Activated CD4-positive, alpha-beta T cell treated with anti-CD3 and anti-CD28 coated beads for 36 hours (primary cell): ENCODE measurements at regions of chr2 and their contacts with region 1.

Region 1: GRCh38 chr2:219229305-219230058 is at the starts of genes ANKZF1 and ATG9A:
- DNase-seq: peak; percentile 99
- ATAC-seq: peak; percentile 98
- H3K4me3 Mint-ChIP-seq: peak within 1 kb of the TSS; percentile 98
- H3K27ac Mint-ChIP-seq: peak within 1 kb of the TSS; percentile 98
- H3K4me1 Mint-ChIP-seq: peaks cover 34% of the 10 kb centered on the region
- H3K27me3 Mint-ChIP-seq: no peaks in the 10 kb centered on the region
- total RNA-seq, gene ANKZF1: 140 to 166 TPM
- total RNA-seq, gene ATG9A: 43.5 to 45.6 TPM

Region 2: GRCh38 chr2:219029829-219030165 is 199.7 kb before region 1 on chr2:
- CTCF ChIA-PET with region 1: no interaction called
- POLR2A ChIA-PET with region 1: no interaction called
- intact Hi-C with region 1: no loop called
- DNase-seq: peak; percentile 88
- ATAC-seq: peak; percentile 98
- H3K4me3 Mint-ChIP-seq: no peak overlapping the region
- H3K27ac Mint-ChIP-seq: no peak overlapping the region
- H3K4me1 Mint-ChIP-seq: no peaks in the 10 kb centered on the region
- H3K27me3 Mint-ChIP-seq: peaks cover 11% of the 10 kb centered on the region

Region 3: DNA sequence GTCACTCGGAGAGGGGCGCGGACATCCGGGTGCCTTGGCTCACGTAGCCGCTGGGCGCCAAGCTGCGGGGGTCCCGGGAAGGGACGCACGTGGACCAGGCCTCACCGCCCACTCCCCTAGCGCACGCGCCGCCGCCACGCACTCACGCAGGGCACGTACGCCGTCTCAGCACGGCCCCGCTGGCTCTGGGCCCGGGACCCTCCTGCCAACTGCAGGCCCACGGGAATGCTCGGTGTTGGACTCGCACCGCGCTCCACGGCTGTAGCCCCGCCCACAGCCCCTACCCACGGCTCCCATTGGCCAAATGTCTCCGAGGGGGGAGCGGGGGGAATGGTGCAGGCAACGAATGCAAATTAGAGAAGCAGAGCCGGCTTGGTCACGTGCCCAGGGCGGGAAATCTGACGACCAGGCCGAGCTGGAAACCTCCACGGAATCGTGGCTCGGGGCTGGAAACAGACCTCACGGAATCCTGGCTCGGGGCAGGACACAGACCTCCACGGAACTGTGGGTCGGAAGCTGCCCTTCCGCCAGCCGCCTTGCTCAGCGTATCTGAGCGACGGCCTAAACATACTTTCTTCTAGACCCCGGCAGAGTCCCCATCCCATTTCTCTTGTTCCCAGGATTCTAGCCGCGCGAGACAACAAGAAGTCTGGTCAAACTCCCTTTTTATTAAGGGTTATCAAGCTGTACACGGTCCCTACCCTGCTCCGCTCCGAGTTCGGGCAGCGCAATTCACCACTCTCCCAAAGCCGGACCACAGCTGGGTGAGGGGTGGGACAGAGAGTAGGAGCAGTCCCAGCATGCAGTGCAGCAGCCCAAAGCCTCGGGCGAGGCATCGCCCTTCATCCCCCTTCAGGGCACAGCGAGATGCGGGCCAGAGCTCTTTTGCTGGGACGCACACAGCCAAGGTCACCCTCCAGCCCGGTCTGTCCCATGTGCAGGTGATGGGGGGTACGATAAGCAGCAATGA is 10.5 kb before region 1 on chr2 and contains the start of gene ABCB6:
- CTCF ChIA-PET with region 1: interaction called, 7 read pairs
- POLR2A ChIA-PET with region 1: interaction called, 3 read pairs
- intact Hi-C with region 1: loop called (anchors 1 kb)
- DNase-seq: peak; percentile 94
- ATAC-seq: peak; percentile 89
- H3K4me3 Mint-ChIP-seq: peak within 1 kb of the TSS; percentile 83
- H3K27ac Mint-ChIP-seq: peak within 1 kb of the TSS; percentile 74
- H3K4me1 Mint-ChIP-seq: peaks cover 24% of the 10 kb centered on the region
- H3K27me3 Mint-ChIP-seq: no peaks in the 10 kb centered on the region
- total RNA-seq, gene ABCB6: 18.2 to 21.9 TPM

Region 4: DNA sequence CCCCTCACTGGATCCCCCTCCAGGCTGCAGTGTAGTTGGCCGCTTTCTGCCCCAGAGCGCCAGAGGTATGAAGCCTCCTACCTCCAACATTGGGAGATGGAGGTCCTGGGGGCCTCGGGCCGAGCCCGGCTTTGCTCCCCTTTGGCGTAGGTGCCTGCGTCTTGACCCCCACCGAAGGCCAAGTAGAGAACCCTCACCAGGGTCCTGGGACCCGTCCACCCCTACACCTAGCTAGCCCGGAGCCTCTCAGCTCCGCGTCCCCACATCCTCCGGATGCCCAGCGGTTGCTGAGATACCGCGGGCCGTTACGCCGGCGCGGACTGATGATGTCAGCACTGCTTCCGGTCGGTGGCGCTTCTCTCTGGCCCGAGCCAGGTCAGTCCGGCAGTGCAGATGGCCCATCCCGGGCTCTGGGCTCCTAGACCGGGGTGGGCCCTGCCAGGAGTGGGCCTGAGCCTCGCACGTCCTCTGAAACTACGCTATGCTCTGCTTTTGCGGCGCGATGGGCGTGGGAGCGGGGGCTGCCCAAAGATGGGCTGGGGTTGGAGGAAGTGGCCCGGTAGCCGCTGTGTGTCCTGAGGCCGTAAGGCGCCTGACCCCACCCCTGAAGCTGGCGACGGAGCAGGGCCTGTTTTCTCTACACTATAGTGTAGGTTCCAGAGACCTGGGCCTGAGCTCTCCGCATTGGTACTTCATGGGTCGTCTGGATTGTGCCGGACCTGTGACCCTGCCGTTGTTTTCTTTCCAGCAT is 15.8 kb after region 1 on chr2 and contains the starts of genes GLB1L and STK16:
- CTCF ChIA-PET with region 1: interaction called, 6 read pairs
- POLR2A ChIA-PET with region 1: interaction called, 9 read pairs
- intact Hi-C with region 1: loop called (anchors 1 kb)
- DNase-seq: peak; percentile 93
- ATAC-seq: peak; percentile 62
- H3K4me3 Mint-ChIP-seq: peak within 1 kb of the TSS; percentile 89
- H3K27ac Mint-ChIP-seq: peak within 1 kb of the TSS; percentile 100
- H3K4me1 Mint-ChIP-seq: peaks cover 59% of the 10 kb centered on the region
- H3K27me3 Mint-ChIP-seq: no peaks in the 10 kb centered on the region
- total RNA-seq, gene GLB1L: 2.7 to 4.2 TPM
- total RNA-seq, gene STK16: 34.3 to 35.4 TPM

Region 5: GRCh38 chr2:219552382-219553167 is 323.1 kb after region 1 on chr2:
- CTCF ChIA-PET with region 1: no interaction called
- POLR2A ChIA-PET with region 1: no interaction called
- intact Hi-C with region 1: loop called in 1 of 2 experiments (anchors 1 kb)
- DNase-seq: peak; percentile 89
- ATAC-seq: peak; percentile 94
- H3K4me3 Mint-ChIP-seq: peak overlapping the region; percentile 66
- H3K27ac Mint-ChIP-seq: no peak overlapping the region
- H3K4me1 Mint-ChIP-seq: peaks cover 5% of the 10 kb centered on the region
- H3K27me3 Mint-ChIP-seq: peaks cover 31% of the 10 kb centered on the region